Activated naive CD4-positive, alpha-beta T cell treated with anti-CD3 and anti-CD28 coated beads, Interleukin-2, amount 10 ng/mL, durations not matched to agents 7 days and 5 days (primary cell): ENCODE measurements at regions of chr10 and their contacts with region 1.

Region 1: DNA sequence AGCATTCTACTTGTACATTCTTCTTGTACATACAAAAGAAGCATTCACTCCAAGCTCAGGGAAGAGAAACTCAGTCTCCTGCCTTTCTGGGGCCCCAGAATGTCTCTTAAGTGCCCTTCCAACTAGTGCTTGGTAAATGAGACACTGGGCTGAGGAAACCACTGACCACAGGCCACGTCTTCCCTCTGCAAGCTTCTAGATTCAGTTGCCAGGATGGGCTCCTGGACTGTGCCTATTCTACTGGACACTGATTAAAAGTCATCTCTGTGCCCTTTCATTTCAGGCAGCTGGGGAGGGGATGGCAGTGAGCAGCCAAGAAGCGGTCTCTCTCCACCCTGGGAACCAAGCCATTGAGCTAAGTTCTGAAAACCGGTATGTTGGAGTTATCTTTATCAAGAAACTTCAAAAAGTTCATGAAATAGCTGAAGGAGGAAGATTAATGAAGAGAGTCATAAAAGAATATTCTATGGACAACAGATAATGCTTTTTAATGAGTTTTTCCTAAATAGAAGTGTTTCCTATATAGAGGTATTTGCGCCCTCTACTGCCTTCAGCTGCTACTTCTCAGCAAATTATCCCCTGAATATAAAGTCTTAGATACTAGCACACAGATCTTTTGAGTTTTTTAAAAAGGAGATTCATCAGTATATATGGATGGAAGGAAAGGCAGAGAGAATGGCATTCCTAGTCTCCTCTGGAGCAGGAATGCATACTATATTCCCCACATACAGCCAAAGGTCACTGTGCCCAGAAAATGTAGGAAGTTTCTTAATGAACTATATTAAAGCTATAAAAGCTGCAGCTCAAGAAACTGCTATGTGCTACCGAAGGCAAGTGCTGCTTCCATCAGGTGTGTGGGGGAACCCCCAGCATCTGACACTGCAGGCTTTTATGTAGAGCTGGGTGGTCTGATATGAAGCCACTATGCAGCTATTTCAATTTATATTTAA is 8.4 kb upstream of the IFIT1B start:
- DNase-seq: peak; percentile 41
- H3K4me3 Mint-ChIP-seq: no peak overlapping the region
- H3K27ac Mint-ChIP-seq: no peak overlapping the region
- H3K4me1 Mint-ChIP-seq: peaks cover 3% of the 10 kb centered on the region
- H3K27me3 Mint-ChIP-seq: peaks cover 13% of the 10 kb centered on the region

Region 2: DNA sequence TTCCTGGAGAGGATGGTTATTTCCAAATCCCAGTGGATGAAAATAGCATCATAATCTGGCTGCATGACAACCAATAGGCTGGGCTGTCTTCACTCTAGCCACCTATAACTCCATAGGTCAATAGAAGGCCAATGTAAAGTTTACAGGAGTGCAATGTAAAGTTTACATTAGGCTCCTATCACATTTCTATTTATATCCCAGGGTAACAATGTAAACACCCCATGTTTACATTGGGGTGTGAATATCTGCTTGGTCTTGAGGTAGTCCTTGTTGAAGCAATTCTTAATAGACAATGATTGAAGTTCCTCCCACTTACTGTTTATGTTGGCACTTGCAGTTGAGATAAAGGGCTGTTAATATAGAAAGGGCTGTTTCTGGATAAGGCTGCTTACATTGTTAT is 183.8 kb before region 1 on chr10:
- CTCF ChIA-PET with region 1: no interaction called
- DNase-seq: no peak
- H3K4me3 Mint-ChIP-seq: no peak overlapping the region
- H3K27ac Mint-ChIP-seq: no peak overlapping the region
- H3K4me1 Mint-ChIP-seq: no peaks in the 10 kb centered on the region
- H3K27me3 Mint-ChIP-seq: peaks cover 18% of the 10 kb centered on the region

Region 3: DNA sequence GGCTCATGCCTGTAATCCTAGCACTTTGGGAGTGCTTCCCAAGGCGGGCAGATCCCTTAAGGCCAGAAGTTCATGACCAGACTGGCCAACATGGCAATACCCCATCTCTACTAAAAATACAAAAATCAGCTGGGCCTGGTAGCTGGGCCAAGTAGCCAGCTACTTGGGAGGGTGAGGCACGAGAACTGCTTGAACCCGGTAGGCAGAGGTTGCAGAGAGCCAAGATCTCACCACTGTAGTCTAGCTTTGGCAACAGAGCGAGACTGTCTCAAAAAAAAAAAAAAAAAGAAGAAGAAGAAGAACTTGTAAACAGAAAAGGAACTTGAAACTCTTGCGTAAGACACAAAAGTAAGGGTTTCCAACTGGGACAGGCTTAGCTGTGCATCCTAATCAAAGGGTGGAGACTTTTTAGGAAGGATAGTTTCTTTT is 73.2 kb before region 1 on chr10:
- CTCF ChIA-PET with region 1: interaction called, 30 read pairs
- DNase-seq: no peak
- H3K4me3 Mint-ChIP-seq: no peak overlapping the region
- H3K27ac Mint-ChIP-seq: peak overlapping the region; percentile 58
- H3K4me1 Mint-ChIP-seq: peaks cover 44% of the 10 kb centered on the region
- H3K27me3 Mint-ChIP-seq: peaks cover 25% of the 10 kb centered on the region

Region 4: DNA sequence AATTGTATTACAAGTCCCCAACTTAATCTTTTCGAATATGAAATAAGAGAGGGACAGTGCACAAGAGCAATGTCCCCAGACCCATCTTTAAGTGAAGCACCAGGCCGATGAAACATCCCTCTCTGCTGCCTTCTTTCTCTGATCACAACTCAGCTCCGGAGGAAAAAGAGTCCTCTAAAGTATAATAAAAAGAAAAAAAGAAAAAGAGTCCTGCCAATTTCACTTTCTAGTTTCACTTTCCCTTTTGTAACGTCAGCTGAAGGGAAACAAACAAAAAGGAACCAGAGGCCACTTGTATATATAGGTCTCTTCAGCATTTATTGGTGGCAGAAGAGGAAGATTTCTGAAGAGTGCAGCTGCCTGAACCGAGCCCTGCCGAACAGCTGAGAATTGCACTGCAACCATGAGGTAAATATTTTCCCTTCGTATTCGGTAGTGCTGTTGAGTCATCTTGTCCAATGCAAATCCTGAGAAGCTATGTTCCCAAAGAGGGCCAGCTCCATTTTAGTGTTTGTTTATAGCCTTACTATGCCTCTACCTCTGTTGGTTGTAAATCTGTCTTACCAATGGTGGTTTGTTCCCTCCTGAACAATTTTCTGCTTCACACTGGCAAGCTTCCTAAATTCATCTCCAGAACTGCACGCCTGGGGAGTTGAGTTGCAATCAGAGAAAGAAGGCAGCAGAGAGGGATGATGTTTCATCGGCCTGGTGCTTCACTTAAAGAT is 67.5 kb before region 1 on chr10 and contains the start of gene IFIT2:
- CTCF ChIA-PET with region 1: interaction called, 12 read pairs
- DNase-seq: peak; percentile 48
- H3K4me3 Mint-ChIP-seq: peak within 1 kb of the TSS; percentile 80
- H3K27ac Mint-ChIP-seq: peak within 1 kb of the TSS; percentile 97
- H3K4me1 Mint-ChIP-seq: peaks cover 43% of the 10 kb centered on the region
- H3K27me3 Mint-ChIP-seq: peaks cover 18% of the 10 kb centered on the region

Region 5: GRCh38 chr10:89337484-89337883 is 31.9 kb before region 1 on chr10:
- CTCF ChIA-PET with region 1: interaction called, 15 read pairs
- DNase-seq: peak; percentile 31
- H3K4me3 Mint-ChIP-seq: no peak overlapping the region
- H3K27ac Mint-ChIP-seq: no peak overlapping the region
- H3K4me1 Mint-ChIP-seq: peaks cover 39% of the 10 kb centered on the region
- H3K27me3 Mint-ChIP-seq: peaks cover 54% of the 10 kb centered on the region

Region 6: DNA sequence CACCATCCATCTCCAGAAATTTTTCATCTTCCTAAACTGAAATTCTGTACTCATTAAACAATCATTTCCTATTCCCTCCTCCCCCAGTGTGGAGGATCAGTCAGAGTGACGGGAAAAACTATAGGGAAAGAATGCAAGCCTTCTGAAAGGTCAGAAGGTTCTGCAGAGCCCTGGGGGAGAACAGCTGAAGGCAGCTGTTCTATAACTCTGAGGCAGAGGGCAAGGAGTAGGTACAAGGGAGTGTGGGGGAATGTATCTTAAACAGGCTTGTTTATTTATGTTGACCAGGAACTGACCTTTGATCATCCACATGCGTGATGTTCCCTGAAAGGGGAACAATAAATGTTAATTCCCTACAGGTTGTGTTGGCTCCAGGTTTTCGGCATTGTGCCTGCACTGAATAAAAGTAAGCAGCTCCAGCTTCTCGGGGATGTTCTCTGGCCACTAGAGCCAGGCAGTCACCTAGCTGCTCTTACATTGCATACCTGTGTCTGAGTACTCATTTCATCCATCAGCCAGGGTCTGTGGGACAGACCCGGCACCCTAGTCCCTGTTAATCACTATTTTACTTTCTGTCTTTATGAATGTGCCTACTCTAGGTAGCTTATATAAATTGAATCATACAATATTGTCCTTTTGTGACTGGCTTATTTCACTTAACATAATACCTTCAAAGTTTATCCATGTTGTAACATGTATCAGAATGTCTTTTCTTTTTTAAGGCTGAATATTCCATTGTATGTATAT is 28.7 kb after region 1 on chr10:
- CTCF ChIA-PET with region 1: no interaction called
- DNase-seq: no peak
- H3K4me3 Mint-ChIP-seq: no peak overlapping the region
- H3K27ac Mint-ChIP-seq: no peak overlapping the region
- H3K4me1 Mint-ChIP-seq: peaks cover 15% of the 10 kb centered on the region
- H3K27me3 Mint-ChIP-seq: no peaks in the 10 kb centered on the region